ENCODE measurements at regions of chr16 and their contacts with region 1.

Region 1: GRCh38 chr16:85393674-85394483 is 219.2 kb upstream of the GSE1 start:
- DNase-seq: no peak
- H3K4me3 ChIP-seq: no peak overlapping the region
- H3K27ac ChIP-seq: peak overlapping the region in 1 of 2 donors; percentile 22
- H3K4me1 ChIP-seq: peaks cover 8% of the 10 kb centered on the region
- H3K27me3 ChIP-seq: no peaks in the 10 kb centered on the region
- CTCF ChIP-seq: peak; percentile 56 to 70 (median 59)
- POLR2A ChIP-seq: no peak

Region 2: GRCh38 chr16:85321509-85322271 is 72.2 kb before region 1 on chr16:
- intact Hi-C with region 1: loop called (anchors 5 kb)
- DNase-seq: peak; percentile 87
- H3K4me3 ChIP-seq: no peak overlapping the region
- H3K27ac ChIP-seq: peak overlapping the region; percentile 77 to 84
- H3K4me1 ChIP-seq: peaks cover 11% of the 10 kb centered on the region
- H3K27me3 ChIP-seq: no peaks in the 10 kb centered on the region
- CTCF ChIP-seq: no peak
- POLR2A ChIP-seq: no peak

Measured in prostate gland (tissue), 2 donors.